Activated T-helper 2 cell treated with anti-CD3 and anti-CD28 coated beads, Interferon-gamma antibody, Interleukin-2, Interleukin-4, amounts not matched to agents 10 μg/mL and 5 μg/mL and 100 μg/mL, durations not matched to agents 14 hours and 24 hours and 36 hours (primary cell): ENCODE measurements at regions of chr3 and their contacts with region 1.

Region 1: GRCh38 chr3:188257384-188258026 is 103.5 kb downstream of the LPP start:
- DNase-seq: no peak
- H3K4me3 Mint-ChIP-seq: no peak overlapping the region
- H3K27ac Mint-ChIP-seq: peak overlapping the region; percentile 70
- H3K4me1 Mint-ChIP-seq: peaks cover 57% of the 10 kb centered on the region
- H3K27me3 Mint-ChIP-seq: no peaks in the 10 kb centered on the region

Region 2: DNA sequence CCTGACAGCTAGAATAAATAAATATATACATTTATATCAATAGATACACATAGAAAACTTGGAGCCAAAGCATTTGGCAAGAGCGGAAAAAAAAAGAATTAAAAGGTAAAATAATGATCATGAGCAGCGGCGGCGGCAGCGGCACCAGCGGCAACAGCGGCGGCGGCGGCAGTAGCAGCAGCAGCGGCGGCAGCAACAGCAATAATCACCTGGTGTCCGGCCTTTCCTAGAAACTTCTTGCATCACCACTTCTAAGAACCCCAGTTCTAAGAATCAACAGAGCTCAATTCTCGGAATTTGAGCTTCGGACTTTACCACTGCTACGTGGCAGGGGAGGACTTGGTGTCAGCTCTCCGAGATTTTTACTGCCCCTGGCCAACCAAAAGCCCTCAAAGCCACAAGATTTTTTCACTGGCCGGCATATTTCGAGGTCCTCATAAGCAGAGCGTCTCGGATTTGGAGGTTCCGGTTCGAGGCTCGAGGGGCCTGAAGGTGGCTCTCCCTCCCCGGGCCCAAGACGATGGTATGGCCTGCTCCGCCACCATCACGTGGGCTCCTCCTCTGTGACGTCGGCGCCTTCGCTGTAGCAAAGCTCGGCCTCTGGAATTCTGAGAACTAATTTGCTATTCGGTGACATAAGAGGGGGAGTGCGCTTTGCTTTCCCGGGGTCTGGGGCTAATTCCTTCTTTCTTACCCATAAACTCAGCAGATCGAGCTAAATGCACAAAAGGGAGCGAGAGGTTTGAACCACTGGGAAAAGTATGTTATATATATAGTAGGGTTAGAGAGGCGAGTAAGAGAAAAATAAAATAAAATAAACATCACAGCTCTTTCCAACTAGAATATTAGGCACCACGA is 512.1 kb before region 1 on chr3 and contains the start of gene BCL6:
- intact Hi-C with region 1: loop called (anchors 1 kb)
- DNase-seq: peak; percentile 90
- H3K4me3 Mint-ChIP-seq: peak within 1 kb of the TSS; percentile 94
- H3K27ac Mint-ChIP-seq: peak within 1 kb of the TSS; percentile 99
- H3K4me1 Mint-ChIP-seq: peaks cover 55% of the 10 kb centered on the region
- H3K27me3 Mint-ChIP-seq: no peaks in the 10 kb centered on the region
- total RNA-seq, gene BCL6: 12.0 and 16.5 TPM in 2 replicates

Region 3: GRCh38 chr3:188061133-188061532 is 196.4 kb before region 1 on chr3:
- intact Hi-C with region 1: loop called (anchors 2 kb)
- DNase-seq: peak; percentile 59
- H3K4me3 Mint-ChIP-seq: peak overlapping the region; percentile 51
- H3K27ac Mint-ChIP-seq: peak overlapping the region; percentile 80
- H3K4me1 Mint-ChIP-seq: peaks cover 38% of the 10 kb centered on the region
- H3K27me3 Mint-ChIP-seq: no peaks in the 10 kb centered on the region

Region 4: GRCh38 chr3:188170461-188171459 is 86.7 kb before region 1 on chr3:
- intact Hi-C with region 1: loop called (anchors 5 kb)
- DNase-seq: no peak
- H3K4me3 Mint-ChIP-seq: no peak overlapping the region
- H3K27ac Mint-ChIP-seq: peak overlapping the region; percentile 56
- H3K4me1 Mint-ChIP-seq: peaks cover 38% of the 10 kb centered on the region
- H3K27me3 Mint-ChIP-seq: no peaks in the 10 kb centered on the region

Region 5: GRCh38 chr3:188220988-188221818 is 36.3 kb before region 1 on chr3:
- intact Hi-C with region 1: no loop called
- DNase-seq: no peak
- H3K4me3 Mint-ChIP-seq: no peak overlapping the region
- H3K27ac Mint-ChIP-seq: no peak overlapping the region
- H3K4me1 Mint-ChIP-seq: peaks cover 15% of the 10 kb centered on the region
- H3K27me3 Mint-ChIP-seq: no peaks in the 10 kb centered on the region

Region 6: DNA sequence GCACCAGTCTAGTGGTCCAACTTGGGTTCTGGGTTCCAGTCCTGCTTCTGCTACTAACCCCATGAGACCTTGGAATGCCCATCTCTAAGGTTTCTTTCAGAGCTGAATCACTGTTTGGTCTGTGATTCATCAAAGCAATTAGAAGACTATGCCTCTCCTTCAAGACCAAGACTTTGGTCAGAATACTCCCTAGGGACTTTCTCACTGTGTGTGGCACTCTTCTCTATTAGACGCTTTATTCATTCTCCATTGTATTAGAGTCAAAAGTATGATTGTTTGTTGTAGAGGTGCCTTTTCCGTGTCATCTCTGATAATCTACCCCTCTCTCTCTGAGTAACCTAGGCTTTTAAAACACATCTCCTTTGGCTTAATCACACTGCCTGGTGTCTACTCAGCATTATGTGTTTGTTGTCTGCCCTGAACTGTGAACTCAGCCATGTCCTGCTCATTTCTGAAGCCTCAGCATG is 13.1 kb before region 1 on chr3:
- intact Hi-C with region 1: loop called (anchors 1 kb)
- DNase-seq: no peak
- H3K4me3 Mint-ChIP-seq: no peak overlapping the region
- H3K27ac Mint-ChIP-seq: no peak overlapping the region
- H3K4me1 Mint-ChIP-seq: peaks cover 21% of the 10 kb centered on the region
- H3K27me3 Mint-ChIP-seq: no peaks in the 10 kb centered on the region

Region 7: DNA sequence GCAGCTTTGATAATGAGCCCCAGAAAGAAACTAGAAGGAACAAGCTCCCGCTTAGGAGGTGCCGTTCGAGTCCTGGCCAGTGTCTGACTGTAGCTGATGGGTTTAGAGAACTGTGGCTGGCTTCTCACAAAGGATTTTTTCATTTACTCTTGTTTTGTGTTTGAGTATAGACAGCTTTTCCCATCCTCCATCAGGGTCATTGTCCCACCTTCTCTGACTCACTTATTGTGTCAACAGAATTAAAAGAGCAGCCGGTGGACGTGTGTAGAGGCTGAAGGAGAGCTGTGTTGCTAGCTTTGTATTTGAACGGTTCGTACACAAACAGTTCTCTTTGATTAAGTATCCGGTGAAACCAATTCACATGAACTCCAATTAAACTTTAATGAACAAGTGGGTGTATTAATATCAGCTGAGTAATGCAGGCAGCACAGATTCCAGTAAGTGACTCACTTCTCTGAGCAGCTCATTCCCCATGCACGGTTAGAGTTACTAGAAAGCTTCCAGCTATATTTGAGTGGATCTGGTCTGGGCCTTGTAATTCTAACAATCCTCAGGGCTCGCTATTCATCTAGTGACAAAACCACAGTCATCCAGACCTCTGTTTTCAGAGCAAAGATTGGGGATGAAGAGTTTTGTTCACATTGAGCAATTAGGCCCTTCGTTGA is 37.5 kb after region 1 on chr3:
- intact Hi-C with region 1: loop called (anchors 1 kb)
- DNase-seq: no peak
- H3K4me3 Mint-ChIP-seq: no peak overlapping the region
- H3K27ac Mint-ChIP-seq: no peak overlapping the region
- H3K4me1 Mint-ChIP-seq: peaks cover 66% of the 10 kb centered on the region
- H3K27me3 Mint-ChIP-seq: no peaks in the 10 kb centered on the region

Region 8: GRCh38 chr3:188400494-188401243 is 143.2 kb after region 1 on chr3:
- intact Hi-C with region 1: loop called (anchors 5 kb)
- DNase-seq: peak; percentile 22
- H3K4me3 Mint-ChIP-seq: no peak overlapping the region
- H3K27ac Mint-ChIP-seq: peak overlapping the region; percentile 38
- H3K4me1 Mint-ChIP-seq: peaks cover 70% of the 10 kb centered on the region
- H3K27me3 Mint-ChIP-seq: no peaks in the 10 kb centered on the region